Activated CD8-positive, alpha-beta T cell treated with anti-CD3 and anti-CD28 coated beads for 36 hours (primary cell): ENCODE measurements at regions of chr12 and their contacts with region 1.

Region 1: DNA sequence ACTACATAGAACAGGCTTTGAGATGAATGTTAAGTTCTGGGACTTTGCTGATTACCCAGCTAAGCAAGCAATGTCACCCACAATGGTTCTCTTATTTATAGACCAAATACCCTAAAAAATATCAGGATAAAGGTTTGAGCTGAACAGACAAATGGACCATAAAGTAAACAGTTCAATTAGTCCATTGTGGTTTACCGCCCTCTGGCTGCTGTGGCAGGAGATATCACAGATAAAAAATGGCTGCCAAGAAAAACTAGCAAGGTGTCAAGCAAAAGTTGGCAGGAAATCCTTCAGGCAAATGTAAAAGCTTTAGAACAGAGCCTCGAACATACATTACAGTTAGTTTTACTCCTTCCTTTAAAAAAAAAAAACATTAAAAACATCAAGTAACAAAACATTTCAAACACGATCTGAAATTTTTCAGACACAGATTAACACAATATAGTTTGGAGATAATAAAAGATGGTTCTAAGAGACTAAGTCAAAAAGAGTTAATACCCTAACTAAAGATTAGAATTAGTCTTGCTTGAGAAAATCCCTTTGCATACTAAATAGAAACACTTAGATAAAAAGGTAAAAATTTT is 41.3 kb downstream of the MED13L start:
- DNase-seq: peak; percentile 70
- ATAC-seq: peak; percentile 71
- H3K4me3 Mint-ChIP-seq: peak overlapping the region; percentile 53
- H3K27ac Mint-ChIP-seq: peak overlapping the region; percentile 85
- H3K4me1 Mint-ChIP-seq: peaks cover 40% of the 10 kb centered on the region
- H3K27me3 Mint-ChIP-seq: no peaks in the 10 kb centered on the region
- CTCF ChIP-seq: peak; percentile 64

Region 2: GRCh38 chr12:115667116-115667515 is 569.1 kb before region 1 on chr12:
- CTCF ChIA-PET with region 1: no interaction called
- POLR2A ChIA-PET with region 1: no interaction called
- intact Hi-C with region 1: no loop called
- DNase-seq: no peak
- ATAC-seq: no peak
- H3K4me3 Mint-ChIP-seq: no peak overlapping the region
- H3K27ac Mint-ChIP-seq: no peak overlapping the region
- H3K4me1 Mint-ChIP-seq: no peaks in the 10 kb centered on the region
- H3K27me3 Mint-ChIP-seq: peaks cover 4% of the 10 kb centered on the region
- CTCF ChIP-seq: no peak

Region 3: DNA sequence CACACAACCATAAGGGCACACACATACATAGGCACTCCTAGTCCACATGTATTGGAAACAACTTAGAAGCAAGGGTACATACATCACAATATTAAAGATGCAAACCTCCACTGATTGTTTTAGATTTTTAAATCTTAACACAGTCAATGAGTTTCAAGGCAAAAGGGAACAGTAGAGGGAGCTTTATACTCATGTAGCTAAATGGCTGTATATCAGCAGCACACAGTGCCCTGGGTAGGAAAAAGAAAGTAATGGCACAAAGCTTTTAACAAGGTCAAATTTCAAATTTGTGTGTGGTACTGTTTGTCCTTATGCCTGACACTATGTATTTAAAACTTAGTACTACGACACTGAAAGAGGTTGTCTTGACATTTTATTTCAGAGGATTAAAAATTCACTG is 220.7 kb before region 1 on chr12:
- CTCF ChIA-PET with region 1: interaction called, 7 read pairs
- POLR2A ChIA-PET with region 1: no interaction called
- intact Hi-C with region 1: loop called (anchors 10 kb)
- DNase-seq: no peak
- ATAC-seq: peak; percentile 80
- H3K4me3 Mint-ChIP-seq: no peak overlapping the region
- H3K27ac Mint-ChIP-seq: peak overlapping the region; percentile 59
- H3K4me1 Mint-ChIP-seq: peaks cover 4% of the 10 kb centered on the region
- H3K27me3 Mint-ChIP-seq: no peaks in the 10 kb centered on the region
- CTCF ChIP-seq: peak; percentile 36

Region 4: GRCh38 chr12:116135209-116135930 is 100.9 kb before region 1 on chr12:
- CTCF ChIA-PET with region 1: interaction called, 15 read pairs
- POLR2A ChIA-PET with region 1: no interaction called
- intact Hi-C with region 1: no loop called
- DNase-seq: peak; percentile 19
- ATAC-seq: no peak
- H3K4me3 Mint-ChIP-seq: no peak overlapping the region
- H3K27ac Mint-ChIP-seq: peak overlapping the region; percentile 91
- H3K4me1 Mint-ChIP-seq: peaks cover 69% of the 10 kb centered on the region
- H3K27me3 Mint-ChIP-seq: no peaks in the 10 kb centered on the region
- CTCF ChIP-seq: no peak

Region 5: DNA sequence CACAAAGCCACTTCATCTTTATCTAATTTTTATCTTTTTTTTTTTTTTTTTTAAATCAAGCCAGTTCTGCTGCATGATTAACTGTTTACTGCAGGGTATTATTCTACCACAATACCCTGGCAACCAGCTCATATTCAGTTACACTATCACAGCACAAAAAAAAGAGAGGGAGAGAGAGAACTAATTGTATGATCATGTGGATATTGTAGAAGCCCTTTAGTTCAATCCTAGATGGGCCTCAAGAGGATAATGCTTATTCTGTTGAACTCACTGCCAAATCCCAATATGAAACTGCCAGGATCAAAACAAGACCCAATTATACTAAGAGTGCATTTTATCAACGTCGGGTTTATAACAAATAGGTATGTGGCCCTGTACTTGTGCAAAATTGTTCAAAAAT is 10.2 kb before region 1 on chr12:
- CTCF ChIA-PET with region 1: interaction called, 27 read pairs
- POLR2A ChIA-PET with region 1: no interaction called
- intact Hi-C with region 1: no loop called
- DNase-seq: no peak
- ATAC-seq: no peak
- H3K4me3 Mint-ChIP-seq: no peak overlapping the region
- H3K27ac Mint-ChIP-seq: no peak overlapping the region
- H3K4me1 Mint-ChIP-seq: peaks cover 22% of the 10 kb centered on the region
- H3K27me3 Mint-ChIP-seq: no peaks in the 10 kb centered on the region
- CTCF ChIP-seq: no peak